CD8-positive, alpha-beta T cell (primary cell): ENCODE measurements at regions of chr15 and their contacts with region 1.

Region 1: DNA sequence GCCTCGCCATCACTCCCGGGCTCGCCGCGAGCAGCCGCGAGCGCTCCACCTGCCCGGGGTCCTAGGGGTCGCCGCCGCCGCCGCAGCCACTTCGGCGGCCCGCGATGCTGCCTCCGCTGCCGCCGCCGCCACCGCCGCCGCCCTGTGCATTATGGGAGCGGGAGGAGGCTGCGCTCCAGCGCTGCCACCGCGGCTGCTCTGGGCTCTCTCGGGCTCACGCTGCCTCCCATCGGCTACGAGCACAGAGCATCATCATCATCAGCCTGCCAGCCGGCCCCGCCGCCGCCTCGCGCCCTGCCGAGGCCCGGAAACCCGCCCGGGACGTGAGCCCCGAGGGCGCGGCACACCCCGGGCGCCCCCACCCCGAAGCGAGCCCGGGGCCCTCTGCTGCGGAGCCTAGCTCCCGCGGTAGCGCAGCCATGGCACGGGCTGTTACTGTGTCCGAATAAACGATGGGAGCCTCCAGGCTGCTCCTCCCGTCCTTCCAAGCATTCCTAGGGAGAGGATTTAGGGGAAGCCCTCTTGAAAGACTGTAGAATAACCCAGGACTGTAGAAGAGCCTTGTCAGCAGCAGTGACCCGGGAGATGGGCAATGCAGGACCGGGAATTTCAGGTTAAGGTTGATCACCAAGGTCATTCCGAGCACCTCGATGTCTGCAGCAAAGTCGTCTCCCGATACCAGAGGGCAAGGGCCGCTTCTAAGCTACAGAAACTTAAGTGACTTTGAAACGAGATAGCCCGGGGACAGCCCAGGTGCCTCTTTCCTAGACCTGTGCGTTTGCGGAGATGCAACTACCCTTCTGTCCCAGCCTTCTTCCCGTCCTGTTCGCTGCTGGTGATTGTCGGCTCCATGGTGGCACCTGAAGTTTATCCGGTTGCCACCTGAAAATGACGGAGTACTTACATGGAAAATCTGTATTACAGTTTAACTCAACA is 579 bp upstream of the MYO5A start:
- DNase-seq: peak; percentile 59 to 92 (median 80)
- ATAC-seq: peak; percentile 86
- H3K4me3 ChIP-seq: peak overlapping the region; percentile 49 to 51
- H3K4me3 Mint-ChIP-seq: peak overlapping the region; percentile 84
- H3K27ac ChIP-seq: peak overlapping the region; percentile 61 to 78
- H3K27ac Mint-ChIP-seq: peak overlapping the region; percentile 87
- H3K4me1 ChIP-seq: peaks cover 14% of the 10 kb centered on the region
- H3K4me1 Mint-ChIP-seq: peaks cover 33% of the 10 kb centered on the region
- H3K27me3 ChIP-seq: no peaks in the 10 kb centered on the region
- H3K27me3 Mint-ChIP-seq: no peaks in the 10 kb centered on the region
- CTCF ChIP-seq: no peak

Region 2: GRCh38 chr15:52408823-52409222 is 120.4 kb before region 1 on chr15:
- CTCF ChIA-PET with region 1: no interaction called
- POLR2A ChIA-PET with region 1: no interaction called
- intact Hi-C with region 1: loop called in 1 of 2 experiments (anchors 10 kb)
- DNase-seq: no peak
- ATAC-seq: no peak
- H3K4me3 ChIP-seq: no peak overlapping the region
- H3K4me3 Mint-ChIP-seq: no peak overlapping the region
- H3K27ac ChIP-seq: no peak overlapping the region
- H3K27ac Mint-ChIP-seq: no peak overlapping the region
- H3K4me1 ChIP-seq: no peaks in the 10 kb centered on the region
- H3K4me1 Mint-ChIP-seq: no peaks in the 10 kb centered on the region
- H3K27me3 ChIP-seq: no peaks in the 10 kb centered on the region
- H3K27me3 Mint-ChIP-seq: no peaks in the 10 kb centered on the region
- CTCF ChIP-seq: no peak

Region 3: DNA sequence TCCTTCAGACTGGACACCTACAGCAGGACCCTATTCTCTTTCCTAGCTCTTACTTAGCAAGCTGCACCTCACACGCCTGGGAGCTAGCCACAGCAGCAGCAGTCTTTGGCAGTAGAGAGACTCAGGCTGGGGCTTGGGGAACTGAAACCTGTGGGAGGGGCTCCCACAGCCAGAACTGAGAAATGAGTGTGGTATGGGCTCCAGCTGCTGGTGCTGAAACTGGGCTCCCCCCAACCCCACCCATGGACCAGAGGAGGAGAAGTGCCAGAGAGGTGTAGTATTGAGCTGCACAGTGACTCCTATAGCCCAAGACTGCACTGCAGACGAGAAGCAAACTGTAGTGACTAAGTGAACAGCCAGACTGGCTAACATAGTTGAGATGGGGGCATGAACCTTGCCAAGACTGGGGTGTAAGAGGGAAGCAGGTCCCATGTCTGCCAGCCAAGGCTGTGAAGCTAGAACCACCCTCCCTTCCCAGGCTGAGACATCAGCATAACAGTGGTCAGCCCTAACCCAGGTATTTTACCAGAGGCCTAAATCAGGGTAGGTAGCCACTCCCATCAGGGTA is 63.0 kb before region 1 on chr15:
- CTCF ChIA-PET with region 1: interaction called, 4 read pairs
- POLR2A ChIA-PET with region 1: no interaction called
- intact Hi-C with region 1: loop called in 1 of 2 experiments (anchors 10 kb)
- DNase-seq: peak in 3 of 9 experiments; percentile 31 to 56 (median 34)
- ATAC-seq: peak; percentile 58
- H3K4me3 ChIP-seq: no peak overlapping the region
- H3K4me3 Mint-ChIP-seq: no peak overlapping the region
- H3K27ac ChIP-seq: peak overlapping the region in 1 of 2 experiments; percentile 83
- H3K27ac Mint-ChIP-seq: peak overlapping the region; percentile 52
- H3K4me1 ChIP-seq: peaks cover 10% of the 10 kb centered on the region
- H3K4me1 Mint-ChIP-seq: peaks cover 39% of the 10 kb centered on the region
- H3K27me3 ChIP-seq: no peaks in the 10 kb centered on the region
- H3K27me3 Mint-ChIP-seq: no peaks in the 10 kb centered on the region
- CTCF ChIP-seq: no peak

Region 4: DNA sequence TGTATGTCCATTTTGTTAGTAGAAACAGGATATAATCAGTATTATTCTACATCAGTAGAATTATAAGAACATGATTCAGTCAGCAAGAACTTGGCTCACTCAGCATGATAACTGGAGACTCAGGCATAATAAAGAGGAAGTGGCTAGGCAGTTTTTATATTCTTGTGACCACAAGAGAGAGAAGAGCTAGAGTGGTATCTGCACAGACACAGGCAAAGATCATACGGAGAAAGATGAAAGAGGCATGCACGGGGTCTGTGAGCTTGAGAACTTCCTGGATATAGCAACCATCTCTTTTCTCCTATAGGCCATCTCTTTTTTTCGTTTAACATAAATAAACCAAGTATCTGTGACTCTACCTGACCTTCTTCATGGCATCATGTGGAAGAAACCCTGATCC is 47.3 kb before region 1 on chr15:
- CTCF ChIA-PET with region 1: interaction called, 4 read pairs
- POLR2A ChIA-PET with region 1: interaction called, 8 read pairs
- intact Hi-C with region 1: loop called (anchors 2 kb)
- DNase-seq: peak; percentile 24 to 91 (median 53)
- ATAC-seq: peak; percentile 98
- H3K4me3 ChIP-seq: peak overlapping the region in 1 of 2 experiments; percentile 14
- H3K4me3 Mint-ChIP-seq: peak overlapping the region; percentile 27
- H3K27ac ChIP-seq: peak overlapping the region; percentile 15 to 79
- H3K27ac Mint-ChIP-seq: peak overlapping the region; percentile 81
- H3K4me1 ChIP-seq: peaks cover 26% of the 10 kb centered on the region
- H3K4me1 Mint-ChIP-seq: peaks cover 66% of the 10 kb centered on the region
- H3K27me3 ChIP-seq: no peaks in the 10 kb centered on the region
- H3K27me3 Mint-ChIP-seq: no peaks in the 10 kb centered on the region
- CTCF ChIP-seq: no peak

Region 5: DNA sequence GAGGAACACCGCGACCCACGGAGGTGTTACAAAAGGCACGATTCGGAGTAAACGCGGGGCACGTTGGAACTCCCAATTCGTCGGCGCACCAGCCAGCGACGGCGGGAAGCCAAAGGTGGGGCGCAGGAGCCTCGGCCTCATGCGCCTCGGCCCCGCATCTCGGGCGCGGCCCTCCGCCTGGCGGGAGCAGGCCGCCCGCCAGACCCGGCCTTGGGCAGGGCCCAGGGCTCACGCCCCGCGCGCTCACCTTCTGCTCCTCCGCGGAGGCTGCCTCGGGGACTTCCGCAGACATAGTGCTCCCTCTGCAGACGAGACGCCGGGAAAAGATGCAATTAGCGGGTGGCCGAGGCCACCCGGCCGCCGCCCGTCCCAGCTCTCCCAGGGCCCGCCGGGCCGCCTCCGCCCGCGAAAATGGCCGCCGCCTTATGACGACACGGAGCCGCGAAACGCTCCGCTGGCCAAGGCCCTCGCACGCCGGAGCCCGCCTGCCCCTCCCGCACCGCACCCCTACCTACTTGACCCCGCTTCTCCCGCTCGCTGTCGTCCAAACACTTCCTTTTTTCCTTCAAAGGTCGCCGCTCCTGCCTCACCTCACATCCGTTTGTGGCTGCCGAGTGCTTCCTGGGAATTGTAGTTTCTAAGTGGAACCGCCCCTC is 39.5 kb after region 1 on chr15 and contains the start of gene ARPP19:
- CTCF ChIA-PET with region 1: interaction called, 3 read pairs
- POLR2A ChIA-PET with region 1: interaction called, 3 read pairs
- intact Hi-C with region 1: loop called (anchors 1 kb)
- DNase-seq: peak; percentile 56 to 90 (median 77)
- ATAC-seq: peak; percentile 72
- H3K4me3 ChIP-seq: peak within 1 kb of the TSS; percentile 66 to 74
- H3K4me3 Mint-ChIP-seq: peak within 1 kb of the TSS; percentile 94
- H3K27ac ChIP-seq: peak within 1 kb of the TSS; percentile 93 to 95
- H3K27ac Mint-ChIP-seq: peak within 1 kb of the TSS; percentile 99
- H3K4me1 ChIP-seq: peaks cover 29% of the 10 kb centered on the region
- H3K4me1 Mint-ChIP-seq: peaks cover 40% of the 10 kb centered on the region
- H3K27me3 ChIP-seq: no peaks in the 10 kb centered on the region
- H3K27me3 Mint-ChIP-seq: no peaks in the 10 kb centered on the region
- CTCF ChIP-seq: no peak
- total RNA-seq, gene ARPP19: 141 to 156 TPM

Region 6: GRCh38 chr15:52735231-52736089 is 206.2 kb after region 1 on chr15:
- CTCF ChIA-PET with region 1: no interaction called
- POLR2A ChIA-PET with region 1: no interaction called
- intact Hi-C with region 1: loop called (anchors 1 to 5 kb)
- DNase-seq: peak; percentile 39 to 83 (median 64)
- ATAC-seq: peak; percentile 89
- H3K4me3 ChIP-seq: no peak overlapping the region
- H3K4me3 Mint-ChIP-seq: no peak overlapping the region
- H3K27ac ChIP-seq: no peak overlapping the region
- H3K27ac Mint-ChIP-seq: no peak overlapping the region
- H3K4me1 ChIP-seq: peaks cover 3% of the 10 kb centered on the region
- H3K4me1 Mint-ChIP-seq: peaks cover 5% of the 10 kb centered on the region
- H3K27me3 ChIP-seq: no peaks in the 10 kb centered on the region
- H3K27me3 Mint-ChIP-seq: peaks cover 7% of the 10 kb centered on the region
- CTCF ChIP-seq: peak; percentile 95